Activated naive CD4-positive, alpha-beta T cell treated with anti-CD3 and anti-CD28 coated beads for 36 hours (primary cell): ENCODE measurements at regions of chr1 and their contacts with region 1.

Region 1: DNA sequence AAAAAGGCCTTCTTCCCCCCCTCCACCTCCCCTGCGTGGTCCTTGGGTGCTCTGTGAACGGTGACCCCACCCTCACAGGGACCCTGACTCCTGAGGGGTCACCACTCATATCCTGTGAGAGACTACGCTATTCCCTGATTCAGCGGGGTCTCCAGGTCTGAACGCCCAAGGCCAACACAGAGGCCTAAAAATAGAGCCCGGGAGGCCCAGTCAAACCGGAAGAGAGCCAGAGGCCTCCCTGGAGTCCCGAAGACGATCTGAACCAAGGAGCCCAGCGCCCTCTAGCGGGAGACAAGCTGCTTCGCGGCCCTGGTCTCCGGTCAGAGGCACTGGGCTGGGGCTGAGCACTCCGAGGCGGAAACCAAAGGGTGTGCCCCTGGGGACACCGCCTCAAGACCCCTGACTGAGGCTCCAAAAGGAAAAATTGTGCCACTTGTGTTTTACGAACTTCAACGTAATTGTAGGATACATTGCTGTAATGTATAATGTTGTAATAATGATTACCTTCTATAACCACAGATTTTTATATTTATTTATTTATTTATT is 42.4 kb upstream of the PSEN2 start:
- DNase-seq: peak; percentile 99
- H3K4me3 Mint-ChIP-seq: peak overlapping the region; percentile 64
- H3K27ac Mint-ChIP-seq: peak overlapping the region; percentile 90
- H3K4me1 Mint-ChIP-seq: peaks cover 35% of the 10 kb centered on the region
- H3K27me3 Mint-ChIP-seq: no peaks in the 10 kb centered on the region

Region 2: DNA sequence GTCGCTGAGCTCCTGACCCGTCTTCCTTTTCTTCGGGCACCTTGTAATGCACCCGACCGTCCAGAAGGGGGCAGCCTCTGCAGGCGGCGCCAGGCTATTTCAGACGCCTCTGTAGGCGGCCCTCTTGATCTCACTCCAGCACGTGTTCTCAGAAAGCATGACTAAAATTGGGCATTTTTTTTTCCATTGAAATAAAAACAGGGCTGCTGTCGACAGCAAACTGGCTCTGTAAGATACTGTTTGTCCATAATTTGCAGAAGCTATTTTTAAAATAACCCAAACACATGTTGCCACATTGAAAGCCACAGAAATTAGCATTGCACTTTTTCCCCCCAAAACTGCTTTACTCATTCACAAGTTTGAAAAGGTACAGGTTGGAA is 201.5 kb before region 1 on chr1:
- CTCF ChIA-PET with region 1: interaction called, 16 read pairs
- intact Hi-C with region 1: loop called (anchors 1 kb)
- DNase-seq: peak; percentile 90
- H3K4me3 Mint-ChIP-seq: peak overlapping the region; percentile 10
- H3K27ac Mint-ChIP-seq: peak overlapping the region; percentile 68
- H3K4me1 Mint-ChIP-seq: peaks cover 25% of the 10 kb centered on the region
- H3K27me3 Mint-ChIP-seq: no peaks in the 10 kb centered on the region

Region 3: DNA sequence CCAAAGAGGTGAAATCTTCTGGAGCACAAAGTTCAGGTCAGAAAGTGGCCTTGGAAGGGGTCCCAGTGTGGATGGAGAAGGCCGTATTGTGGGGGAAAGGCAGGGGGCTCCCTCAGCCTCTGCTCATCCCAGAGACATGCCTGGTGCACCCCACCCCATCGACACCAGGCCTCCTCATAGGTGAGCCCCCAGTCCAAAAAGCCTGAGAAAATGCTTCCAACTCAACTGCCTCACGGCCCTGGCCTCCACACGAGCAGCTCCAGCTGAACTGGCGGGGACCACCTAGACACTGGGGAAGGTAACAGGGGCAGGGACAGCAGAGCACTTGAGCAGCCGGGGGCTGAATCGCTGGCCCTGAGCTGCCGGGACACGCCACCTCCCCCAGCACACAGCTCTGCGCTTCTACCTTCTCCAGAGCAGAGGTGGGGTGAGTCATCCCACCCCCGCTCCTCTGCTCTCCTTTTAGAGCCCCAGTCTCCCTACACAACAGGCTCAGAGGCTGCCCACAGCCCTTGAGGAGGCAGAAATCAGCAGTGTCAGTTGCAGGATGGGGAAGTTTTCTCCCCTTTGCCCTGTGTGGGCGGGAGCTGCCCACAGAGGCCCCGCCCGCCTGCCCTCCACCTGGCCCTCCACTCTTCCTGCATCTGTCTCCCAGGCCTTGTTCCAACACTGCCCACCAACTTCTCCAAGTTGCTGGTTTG is 185.0 kb before region 1 on chr1:
- CTCF ChIA-PET with region 1: interaction called, 10 read pairs
- intact Hi-C with region 1: no loop called
- DNase-seq: peak; percentile 80
- H3K4me3 Mint-ChIP-seq: peak overlapping the region; percentile 40
- H3K27ac Mint-ChIP-seq: peak overlapping the region; percentile 80
- H3K4me1 Mint-ChIP-seq: peaks cover 52% of the 10 kb centered on the region
- H3K27me3 Mint-ChIP-seq: no peaks in the 10 kb centered on the region

Region 4: GRCh38 chr1:226687426-226687825 is 140.6 kb before region 1 on chr1:
- CTCF ChIA-PET with region 1: interaction called, 4 read pairs
- intact Hi-C with region 1: loop called (anchors 2 kb)
- DNase-seq: peak; percentile 74
- H3K4me3 Mint-ChIP-seq: peak overlapping the region; percentile 27
- H3K27ac Mint-ChIP-seq: peak overlapping the region; percentile 100
- H3K4me1 Mint-ChIP-seq: peaks cover 100% of the 10 kb centered on the region
- H3K27me3 Mint-ChIP-seq: no peaks in the 10 kb centered on the region

Region 5: DNA sequence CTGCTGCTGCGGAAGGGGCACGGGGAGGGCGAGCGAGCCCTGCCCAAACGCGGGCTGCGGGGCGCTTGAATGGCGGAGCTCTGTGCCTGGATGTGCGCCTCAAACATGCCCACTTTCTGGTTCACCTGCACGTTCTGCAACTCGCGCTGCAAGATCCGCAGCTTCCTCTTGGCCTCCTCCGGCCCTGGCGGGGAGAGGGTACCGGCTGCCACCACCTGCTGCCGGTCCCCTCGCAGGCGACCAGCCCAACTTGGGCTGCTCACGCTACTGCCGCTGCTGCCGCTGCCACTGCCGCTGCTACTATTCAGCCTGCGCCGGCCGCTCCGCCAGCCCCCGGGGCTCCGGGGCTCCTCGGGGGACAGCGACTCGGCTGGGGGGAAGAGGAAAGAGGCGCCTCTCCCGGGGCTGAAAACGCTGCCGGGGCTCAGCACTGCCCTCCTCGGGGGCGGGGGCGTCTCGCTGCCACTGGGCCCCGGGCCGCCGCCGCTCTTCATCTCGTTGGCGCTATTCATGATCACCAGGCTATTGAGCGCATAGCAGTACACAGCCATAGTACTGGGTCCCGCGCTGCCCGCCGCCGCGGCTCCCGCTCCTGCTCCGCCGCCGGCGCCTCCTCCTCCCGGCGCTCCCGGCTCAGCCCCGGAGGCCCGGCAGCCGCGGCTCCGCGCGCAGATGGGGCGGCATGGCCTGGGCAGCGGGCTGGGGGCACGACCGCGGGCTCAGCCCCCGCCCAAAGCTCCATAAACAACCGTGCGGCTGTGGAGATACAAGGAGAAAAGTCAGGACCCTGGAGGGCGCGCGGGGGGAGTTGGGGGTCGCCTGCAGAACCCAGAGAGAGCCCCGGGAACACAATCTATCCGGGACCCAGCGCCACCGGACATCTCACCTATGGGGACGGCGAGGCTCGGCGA is 90.9 kb before region 1 on chr1:
- CTCF ChIA-PET with region 1: interaction called, 6 read pairs
- intact Hi-C with region 1: loop called (anchors 1 kb)
- DNase-seq: peak; percentile 68
- H3K4me3 Mint-ChIP-seq: peak overlapping the region; percentile 77
- H3K27ac Mint-ChIP-seq: peak overlapping the region; percentile 98
- H3K4me1 Mint-ChIP-seq: peaks cover 38% of the 10 kb centered on the region
- H3K27me3 Mint-ChIP-seq: no peaks in the 10 kb centered on the region

Region 6: GRCh38 chr1:226798427-226799411 is 29.3 kb before region 1 on chr1:
- CTCF ChIA-PET with region 1: interaction called, 7 read pairs
- intact Hi-C with region 1: loop called (anchors 2 kb)
- DNase-seq: peak; percentile 80
- H3K4me3 Mint-ChIP-seq: peak overlapping the region; percentile 46
- H3K27ac Mint-ChIP-seq: peak overlapping the region; percentile 82
- H3K4me1 Mint-ChIP-seq: peaks cover 29% of the 10 kb centered on the region
- H3K27me3 Mint-ChIP-seq: no peaks in the 10 kb centered on the region